ENCODE measurements at regions of chr1 and their contacts with region 1.

Region 1: GRCh38 chr1:94926915-94927404 is at the start of gene CNN3:
- DNase-seq: peak; percentile 98
- total RNA-seq, gene CNN3: 385 to 542 TPM

Region 2: GRCh38 chr1:94854458-94855306 is 72.3 kb before region 1 on chr1:
- intact Hi-C with region 1: loop called (anchors 5 to 10 kb)
- DNase-seq: peak; percentile 95

Region 3: DNA sequence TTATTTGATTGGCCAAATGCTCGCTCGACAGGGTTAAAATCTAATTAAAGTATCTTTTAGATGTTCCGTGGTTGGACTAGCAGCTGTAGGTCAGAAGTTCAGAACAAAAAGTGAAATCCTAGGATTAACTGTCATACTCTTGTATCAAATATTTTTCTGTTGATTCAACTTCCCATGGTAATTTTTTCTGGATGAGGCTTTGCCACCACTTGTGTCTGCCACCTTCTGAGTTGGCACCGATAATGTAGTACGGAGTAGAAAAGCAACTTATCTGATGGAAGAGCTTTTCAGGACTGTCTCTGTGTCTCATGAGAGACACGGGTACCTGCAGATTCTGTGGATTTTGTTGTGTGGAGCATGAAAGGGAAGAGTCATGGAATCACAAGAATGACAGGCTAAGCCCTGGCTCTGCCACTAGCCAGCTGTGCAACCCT is 44.5 kb after region 1 on chr1:
- intact Hi-C with region 1: loop called in 1 of 2 experiments (anchors 5 kb)
- DNase-seq: no peak

Region 4: GRCh38 chr1:95023399-95024043 is 96.6 kb after region 1 on chr1:
- intact Hi-C with region 1: loop called in 1 of 2 experiments (anchors 5 kb)
- DNase-seq: no peak

Region 5: DNA sequence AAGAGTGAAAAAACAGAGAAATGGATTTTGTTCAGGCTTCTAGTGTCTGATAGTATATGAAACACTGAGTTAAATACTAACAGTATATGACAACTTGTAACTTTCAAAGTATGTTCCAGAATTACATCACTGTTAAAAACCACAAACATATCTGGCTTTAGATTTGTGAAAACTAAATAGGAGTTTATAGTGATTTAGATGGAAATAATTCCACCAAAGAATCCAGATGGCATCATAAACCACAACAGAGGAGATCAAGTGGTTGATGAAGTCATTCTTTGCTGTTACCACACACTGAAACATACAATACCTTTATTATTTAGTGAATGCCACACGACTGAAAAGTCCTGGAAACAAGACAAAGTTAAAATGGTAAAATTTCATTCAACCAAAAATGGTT is 108.6 kb after region 1 on chr1:
- intact Hi-C with region 1: loop called in 1 of 2 experiments (anchors 10 kb)
- DNase-seq: no peak

Region 6: GRCh38 chr1:95323123-95323522 is 396.2 kb after region 1 on chr1:
- intact Hi-C with region 1: no loop called
- DNase-seq: no peak

Measured in posterior vena cava (tissue), 2 donors.